Motor neuron (in vitro differentiated cells): ENCODE measurements at regions of chr11 and their contacts with region 1.

Region 1: GRCh38 chr11:125874556-125875124 is 12.8 kb upstream of the HYLS1 start:
- ATAC-seq: peak; percentile 93 to 100 (median 100)
- H3K4me3 ChIP-seq: no peak overlapping the region
- H3K27ac ChIP-seq: no peak overlapping the region
- H3K4me1 ChIP-seq: no peaks in the 10 kb centered on the region

Region 2: DNA sequence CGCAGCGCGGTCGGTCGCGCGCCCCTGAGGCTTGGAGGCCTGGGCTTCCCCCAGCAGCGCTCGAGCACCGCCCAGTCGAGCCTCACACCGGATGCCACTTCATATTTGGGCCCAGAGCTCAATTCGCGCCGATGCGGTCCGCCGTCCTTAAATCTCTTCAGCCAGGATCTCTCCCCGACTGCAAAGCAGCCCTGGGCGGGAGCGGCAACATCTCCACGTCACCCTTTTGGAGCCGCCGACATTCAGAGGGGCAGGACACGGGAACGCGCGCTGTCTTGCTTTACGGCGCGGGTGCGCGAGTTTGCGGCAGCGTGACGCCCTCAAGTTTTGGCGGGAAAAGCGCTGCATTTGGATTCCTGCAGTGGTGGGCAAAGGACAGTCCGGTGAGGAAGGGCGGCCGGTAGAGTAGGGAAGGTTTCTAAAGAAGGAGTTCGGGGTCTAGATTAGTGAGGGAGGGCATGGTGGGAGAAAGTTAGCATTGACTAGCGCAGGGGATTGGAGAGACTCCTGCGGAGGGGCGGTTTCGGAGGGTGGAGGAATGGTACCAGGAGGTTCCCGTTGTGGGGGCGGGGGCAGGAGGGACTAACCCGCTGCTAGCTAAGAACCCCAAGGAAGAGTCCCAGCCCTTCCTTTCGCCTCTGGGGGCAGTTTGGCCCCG is 248.9 kb before region 1 on chr11:
- in situ Hi-C with region 1: loop called in 3 of 9 experiments (anchors 10 to 25 kb)
- ATAC-seq: peak; percentile 68 to 87 (median 81)
- H3K4me3 ChIP-seq: peak overlapping the region; percentile 48 to 77 (median 62)
- H3K27ac ChIP-seq: peak overlapping the region; percentile 95 to 96
- H3K4me1 ChIP-seq: peaks cover 11 to 13% of the 10 kb centered on the region in 2 donors

Region 3: GRCh38 chr11:125750629-125751028 is 124.0 kb before region 1 on chr11:
- in situ Hi-C with region 1: no loop called
- ATAC-seq: no peak
- H3K4me3 ChIP-seq: no peak overlapping the region
- H3K27ac ChIP-seq: no peak overlapping the region
- H3K4me1 ChIP-seq: no peaks in the 10 kb centered on the region